ENCODE measurements at regions of chr7 and their contacts with region 1.

Region 1: GRCh38 chr7:35624299-35625186 is 70.4 kb downstream of the HERPUD2 start:
- DNase-seq: peak; percentile 76
- H3K4me3 ChIP-seq: no peak overlapping the region; a peak in 1 of 4 replicates
- H3K27ac ChIP-seq: no peak overlapping the region
- H3K4me1 ChIP-seq: peaks cover 0 to 4% of the 10 kb centered on the region in 2 experiments; a peak in 1 of 4 replicates
- H3K27me3 ChIP-seq: no peaks in the 10 kb centered on the region
- CTCF ChIP-seq: peak; percentile 99
- EP300 ChIP-seq: no peak
- RAD21 ChIP-seq: peak; percentile 94

Region 2: DNA sequence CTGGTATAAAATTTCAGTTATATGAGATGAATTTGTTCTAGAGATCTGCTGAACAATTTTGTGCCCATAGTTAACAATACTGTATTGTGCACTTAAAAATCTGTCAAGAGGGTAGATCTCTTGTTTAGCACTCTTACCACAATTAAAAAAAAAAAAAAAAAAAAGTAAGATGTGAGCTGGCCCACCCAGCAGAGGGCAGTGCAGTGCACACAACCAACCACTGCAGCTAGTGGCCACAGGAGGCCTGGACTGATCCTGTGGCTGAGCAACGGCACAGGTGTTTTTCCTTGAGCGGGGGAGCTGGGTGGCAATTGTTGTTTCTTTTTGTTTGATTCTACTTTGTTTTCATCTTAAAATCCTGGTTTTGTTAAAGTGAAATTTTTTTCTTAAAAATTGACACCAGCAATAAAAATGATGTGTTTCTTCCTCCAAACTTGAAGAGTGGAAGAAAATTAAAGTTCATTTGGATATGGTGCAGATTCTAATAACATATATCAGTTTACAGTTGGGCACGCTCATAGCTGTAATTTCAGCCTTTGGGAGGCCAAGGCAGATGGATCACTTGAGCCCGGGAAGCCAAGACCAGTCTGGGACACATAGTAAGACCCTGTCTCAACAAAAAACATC is 199.6 kb before region 1 on chr7:
- CTCF ChIA-PET with region 1: interaction called, 23 read pairs
- POLR2A ChIA-PET with region 1: no interaction called
- DNase-seq: peak; percentile 80
- H3K4me3 ChIP-seq: no peak overlapping the region
- H3K27ac ChIP-seq: no peak overlapping the region
- H3K4me1 ChIP-seq: no peaks in the 10 kb centered on the region
- H3K27me3 ChIP-seq: no peaks in the 10 kb centered on the region
- CTCF ChIP-seq: peak; percentile 92
- EP300 ChIP-seq: no peak
- RAD21 ChIP-seq: peak; percentile 87

Region 3: DNA sequence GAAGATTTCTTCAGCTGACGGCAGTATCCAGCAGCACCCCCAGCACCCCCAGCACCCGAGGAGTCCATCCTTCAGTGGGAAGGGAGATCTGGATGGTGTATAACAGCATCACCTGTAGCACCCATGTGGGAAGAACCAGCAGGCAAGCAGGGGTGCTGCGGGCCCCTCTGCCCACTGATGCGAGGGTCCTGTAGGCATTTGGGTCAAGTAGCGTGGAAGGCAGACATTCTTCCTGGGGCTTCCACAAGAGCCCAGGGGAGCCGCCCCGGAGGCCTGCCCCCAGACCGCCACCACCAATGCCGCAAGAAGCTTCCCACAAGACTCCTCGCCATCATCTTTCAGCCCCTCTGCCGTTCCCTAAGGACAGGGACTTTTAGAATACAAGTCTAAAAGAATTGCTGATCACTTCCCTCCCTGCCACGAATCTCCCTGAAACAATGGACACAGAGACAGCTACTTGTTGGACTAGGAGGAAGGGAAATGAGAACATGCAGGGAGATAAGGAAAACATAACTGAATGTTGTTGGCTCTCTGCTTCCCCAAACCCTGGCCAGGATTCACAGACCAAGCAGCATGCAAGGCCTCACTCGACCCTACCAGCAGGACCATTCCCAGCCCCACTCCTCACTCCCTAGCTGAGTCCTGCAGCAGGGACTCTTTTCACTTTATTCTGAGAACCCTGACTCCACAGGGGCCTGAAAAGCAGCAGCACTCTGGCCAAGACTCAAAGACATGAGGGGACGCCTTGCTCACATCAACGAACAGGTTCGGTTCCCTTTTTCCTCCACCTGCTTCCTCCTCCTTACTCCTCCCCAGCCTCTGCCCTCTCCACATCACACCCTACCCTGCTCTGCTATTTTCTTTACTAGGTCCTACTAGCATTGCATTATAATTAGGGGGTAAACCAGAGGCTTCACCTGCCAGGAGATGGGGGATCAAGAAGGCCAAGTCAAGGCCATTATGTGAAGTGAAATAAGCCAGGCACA is 94.1 kb before region 1 on chr7:
- CTCF ChIA-PET with region 1: interaction called, 16 read pairs
- POLR2A ChIA-PET with region 1: no interaction called
- DNase-seq: no peak
- H3K4me3 ChIP-seq: no peak overlapping the region
- H3K27ac ChIP-seq: no peak overlapping the region
- H3K4me1 ChIP-seq: no peaks in the 10 kb centered on the region
- H3K27me3 ChIP-seq: peaks cover 33% of the 10 kb centered on the region
- CTCF ChIP-seq: no peak
- EP300 ChIP-seq: no peak
- RAD21 ChIP-seq: no peak

Region 4: GRCh38 chr7:35555934-35556333 is 68.6 kb before region 1 on chr7:
- CTCF ChIA-PET with region 1: interaction called, 26 read pairs
- POLR2A ChIA-PET with region 1: no interaction called
- DNase-seq: no peak
- H3K4me3 ChIP-seq: no peak overlapping the region
- H3K27ac ChIP-seq: no peak overlapping the region
- H3K4me1 ChIP-seq: peaks cover 0 to 12% of the 10 kb centered on the region in 2 experiments; a peak in 1 of 4 replicates
- H3K27me3 ChIP-seq: peaks cover 17% of the 10 kb centered on the region; the same call in 1 of the 2 replicates
- CTCF ChIP-seq: no peak
- EP300 ChIP-seq: no peak
- RAD21 ChIP-seq: no peak

Region 5: GRCh38 chr7:35599645-35600044 is 24.9 kb before region 1 on chr7:
- CTCF ChIA-PET with region 1: interaction called, 13 read pairs
- POLR2A ChIA-PET with region 1: no interaction called
- DNase-seq: no peak
- H3K4me3 ChIP-seq: no peak overlapping the region
- H3K27ac ChIP-seq: no peak overlapping the region
- H3K4me1 ChIP-seq: peaks cover 0 to 9% of the 10 kb centered on the region in 2 experiments; a peak in 1 of 4 replicates
- H3K27me3 ChIP-seq: no peaks in the 10 kb centered on the region
- CTCF ChIP-seq: no peak
- EP300 ChIP-seq: no peak
- RAD21 ChIP-seq: no peak

Region 6: GRCh38 chr7:35736725-35737124 is 112.2 kb after region 1 on chr7:
- CTCF ChIA-PET with region 1: no interaction called
- POLR2A ChIA-PET with region 1: no interaction called
- DNase-seq: no peak
- H3K4me3 ChIP-seq: no peak overlapping the region
- H3K27ac ChIP-seq: no peak overlapping the region
- H3K4me1 ChIP-seq: peaks cover 0 to 13% of the 10 kb centered on the region in 2 experiments; a peak in 2 of 4 replicates
- H3K27me3 ChIP-seq: no peaks in the 10 kb centered on the region
- CTCF ChIP-seq: no peak
- EP300 ChIP-seq: no peak
- RAD21 ChIP-seq: no peak

Region 7: DNA sequence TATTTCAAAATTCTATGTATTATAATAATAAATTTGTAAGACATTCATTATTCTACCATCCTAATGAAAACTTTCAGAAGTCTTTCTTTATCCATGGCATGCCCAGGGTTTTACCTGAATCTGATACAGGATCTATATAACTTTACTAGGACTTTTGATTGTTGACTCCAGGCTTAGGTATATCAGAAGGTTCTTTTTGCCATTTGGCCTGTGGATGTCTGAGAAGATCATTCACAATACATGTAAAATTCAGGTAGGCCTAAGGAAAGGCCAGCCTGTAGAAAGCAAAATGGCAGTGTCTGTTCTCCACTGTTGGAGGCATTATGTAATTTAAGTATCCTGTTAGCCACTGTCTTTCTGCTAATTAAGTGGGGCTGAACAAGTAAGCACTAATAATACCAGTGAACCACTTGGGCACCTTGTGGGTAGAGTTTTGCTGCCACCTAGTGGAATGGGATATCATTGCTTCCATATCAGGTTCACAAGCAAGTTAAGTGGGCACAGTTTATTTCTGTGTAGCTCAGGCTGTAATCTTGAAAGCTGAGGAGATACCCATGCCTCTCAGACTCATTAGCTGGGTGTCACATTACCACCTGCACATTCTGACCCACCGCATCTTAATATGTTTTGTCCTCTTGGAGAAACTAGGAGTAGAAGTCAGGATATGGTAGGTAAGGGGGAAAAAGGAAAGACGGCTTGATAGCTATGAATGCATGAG is 281.8 kb after region 1 on chr7:
- CTCF ChIA-PET with region 1: interaction called, 18 read pairs
- POLR2A ChIA-PET with region 1: no interaction called
- DNase-seq: peak; percentile 57
- H3K4me3 ChIP-seq: no peak overlapping the region; a peak in 1 of 4 replicates
- H3K27ac ChIP-seq: peak overlapping the region; percentile 13 to 39; a peak in 3 of 4 replicates
- H3K4me1 ChIP-seq: peaks cover 6 to 24% of the 10 kb centered on the region in 2 experiments; a peak in 2 of 4 replicates
- H3K27me3 ChIP-seq: no peaks in the 10 kb centered on the region
- CTCF ChIP-seq: peak; percentile 99
- EP300 ChIP-seq: no peak; a peak in 1 of 4 replicates
- RAD21 ChIP-seq: peak; percentile 96

Measured in SK-N-SH (cell line).